MCF 10A (cell line): ENCODE measurements at regions of chr19 and their contacts with region 1.

Region 1: GRCh38 chr19:9796113-9796773 is 22.6 kb downstream of the FBXL12 start:
- DNase-seq: peak; percentile 94
- H3K4me3 Mint-ChIP-seq: no peak overlapping the region
- H3K27ac Mint-ChIP-seq: peak overlapping the region; percentile 59
- H3K4me1 Mint-ChIP-seq: peaks cover 6% of the 10 kb centered on the region
- H3K27me3 Mint-ChIP-seq: no peaks in the 10 kb centered on the region
- CTCF ChIP-seq: peak; percentile 67

Region 2: GRCh38 chr19:9309139-9309973 is 486.9 kb before region 1 on chr19 and contains the start of gene ZNF699:
- CTCF ChIA-PET with region 1: no interaction called
- POLR2A ChIA-PET with region 1: no interaction called
- intact Hi-C with region 1: loop called (anchors 5 kb)
- DNase-seq: peak; percentile 99
- H3K4me3 Mint-ChIP-seq: peak within 1 kb of the TSS; percentile 92
- H3K27ac Mint-ChIP-seq: peak within 1 kb of the TSS; percentile 81
- H3K4me1 Mint-ChIP-seq: peaks cover 6% of the 10 kb centered on the region
- H3K27me3 Mint-ChIP-seq: no peaks in the 10 kb centered on the region
- CTCF ChIP-seq: no peak
- total RNA-seq, gene ZNF699: 6.4 and 6.7 TPM in 2 replicates

Region 3: GRCh38 chr19:9435279-9436268 is 360.7 kb before region 1 on chr19 and contains the start of gene ZNF266:
- CTCF ChIA-PET with region 1: interaction called, 3 read pairs
- POLR2A ChIA-PET with region 1: no interaction called
- intact Hi-C with region 1: loop called (anchors 10 kb)
- DNase-seq: peak; percentile 89
- H3K4me3 Mint-ChIP-seq: peak within 1 kb of the TSS; percentile 88
- H3K27ac Mint-ChIP-seq: peak within 1 kb of the TSS; percentile 98
- H3K4me1 Mint-ChIP-seq: peaks cover 9% of the 10 kb centered on the region
- H3K27me3 Mint-ChIP-seq: no peaks in the 10 kb centered on the region
- CTCF ChIP-seq: peak; percentile 72
- total RNA-seq, gene ZNF266: 17.0 and 23.7 TPM in 2 replicates

Region 4: GRCh38 chr19:9584073-9584833 is 212.0 kb before region 1 on chr19 and contains the start of gene ZNF121:
- CTCF ChIA-PET with region 1: interaction called, 22 read pairs
- POLR2A ChIA-PET with region 1: interaction called, 12 read pairs
- intact Hi-C with region 1: loop called (anchors 1 kb)
- DNase-seq: peak; percentile 83
- H3K4me3 Mint-ChIP-seq: peak within 1 kb of the TSS; percentile 93
- H3K27ac Mint-ChIP-seq: peak within 1 kb of the TSS; percentile 98
- H3K4me1 Mint-ChIP-seq: peaks cover 5% of the 10 kb centered on the region
- H3K27me3 Mint-ChIP-seq: no peaks in the 10 kb centered on the region
- CTCF ChIP-seq: no peak
- total RNA-seq, gene ZNF121: 51.9 and 63.9 TPM in 2 replicates

Region 5: GRCh38 chr19:9627856-9628255 is 168.4 kb before region 1 on chr19:
- CTCF ChIA-PET with region 1: interaction called, 31 read pairs
- POLR2A ChIA-PET with region 1: interaction called, 5 read pairs
- intact Hi-C with region 1: loop called (anchors 1 kb)
- DNase-seq: no peak
- H3K4me3 Mint-ChIP-seq: no peak overlapping the region
- H3K27ac Mint-ChIP-seq: no peak overlapping the region
- H3K4me1 Mint-ChIP-seq: peaks cover 13% of the 10 kb centered on the region
- H3K27me3 Mint-ChIP-seq: no peaks in the 10 kb centered on the region
- CTCF ChIP-seq: no peak

Region 6: GRCh38 chr19:10499551-10500246 is 703.5 kb after region 1 on chr19:
- CTCF ChIA-PET with region 1: no interaction called
- POLR2A ChIA-PET with region 1: no interaction called
- intact Hi-C with region 1: no loop called
- DNase-seq: no peak
- H3K4me3 Mint-ChIP-seq: no peak overlapping the region
- H3K27ac Mint-ChIP-seq: peak overlapping the region; percentile 35
- H3K4me1 Mint-ChIP-seq: peaks cover 6% of the 10 kb centered on the region
- H3K27me3 Mint-ChIP-seq: no peaks in the 10 kb centered on the region
- CTCF ChIP-seq: no peak